OCI-LY7 (cell line): ENCODE measurements at regions of chr22 and their contacts with region 1.

Region 1: GRCh38 chr22:23178512-23179254 is 1.6 kb upstream of the BCR start:
- DNase-seq: peak; percentile 70
- H3K4me3 ChIP-seq: no peak overlapping the region
- H3K27ac ChIP-seq: peak overlapping the region; percentile 33
- H3K4me1 ChIP-seq: peaks cover 57% of the 10 kb centered on the region
- CTCF ChIP-seq: peak; percentile 99

Region 2: GRCh38 chr22:23014250-23014649 is 164.4 kb before region 1 on chr22:
- CTCF ChIA-PET with region 1: no interaction called
- POLR2A ChIA-PET with region 1: no interaction called
- intact Hi-C with region 1: no loop called
- DNase-seq: no peak
- H3K4me3 ChIP-seq: no peak overlapping the region
- H3K27ac ChIP-seq: no peak overlapping the region
- H3K4me1 ChIP-seq: no peaks in the 10 kb centered on the region
- CTCF ChIP-seq: no peak

Region 3: DNA sequence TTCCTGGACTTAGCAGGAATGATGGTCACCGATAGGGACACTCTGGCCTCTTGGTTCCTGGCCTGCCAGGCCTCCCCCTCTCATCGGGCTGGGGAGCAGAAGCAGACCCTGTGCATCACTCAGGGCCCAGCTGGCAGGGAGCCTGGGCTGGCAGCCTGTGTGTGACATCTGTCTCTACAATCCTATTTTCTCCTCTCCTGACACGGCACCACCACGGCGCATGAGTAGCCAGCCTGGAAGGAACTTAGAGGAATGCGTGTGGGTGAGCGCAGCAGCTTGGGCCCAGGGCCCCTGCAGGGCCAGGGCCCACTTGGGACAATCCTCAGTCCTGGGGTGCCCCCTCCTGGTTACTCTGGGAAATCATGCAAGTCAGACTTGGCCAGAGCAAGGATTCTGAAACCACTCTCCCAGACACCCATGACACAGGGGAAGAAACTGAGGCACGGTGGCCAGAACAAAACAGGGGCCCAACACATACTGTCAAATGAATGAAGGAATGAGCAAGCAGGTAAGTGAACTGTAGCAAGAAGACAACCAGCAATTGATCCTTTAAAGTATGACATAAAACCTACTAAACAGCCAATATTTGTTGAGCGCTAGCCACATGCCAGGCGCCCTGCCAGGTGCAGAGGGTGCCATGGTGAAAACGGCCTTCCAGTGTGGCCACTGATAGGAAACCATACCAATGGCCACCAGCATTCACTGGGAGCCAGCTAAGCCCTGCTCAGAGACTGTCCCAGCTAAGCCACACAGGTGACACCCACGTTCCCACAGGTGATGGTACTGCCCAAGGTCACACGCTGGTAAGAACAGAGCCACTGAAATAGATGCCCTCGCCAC is 50.2 kb before region 1 on chr22:
- CTCF ChIA-PET with region 1: no interaction called
- POLR2A ChIA-PET with region 1: no interaction called
- intact Hi-C with region 1: loop called (anchors 1 kb)
- DNase-seq: peak; percentile 87
- H3K4me3 ChIP-seq: no peak overlapping the region
- H3K27ac ChIP-seq: no peak overlapping the region
- H3K4me1 ChIP-seq: peaks cover 17% of the 10 kb centered on the region
- CTCF ChIP-seq: peak; percentile 97

Region 4: DNA sequence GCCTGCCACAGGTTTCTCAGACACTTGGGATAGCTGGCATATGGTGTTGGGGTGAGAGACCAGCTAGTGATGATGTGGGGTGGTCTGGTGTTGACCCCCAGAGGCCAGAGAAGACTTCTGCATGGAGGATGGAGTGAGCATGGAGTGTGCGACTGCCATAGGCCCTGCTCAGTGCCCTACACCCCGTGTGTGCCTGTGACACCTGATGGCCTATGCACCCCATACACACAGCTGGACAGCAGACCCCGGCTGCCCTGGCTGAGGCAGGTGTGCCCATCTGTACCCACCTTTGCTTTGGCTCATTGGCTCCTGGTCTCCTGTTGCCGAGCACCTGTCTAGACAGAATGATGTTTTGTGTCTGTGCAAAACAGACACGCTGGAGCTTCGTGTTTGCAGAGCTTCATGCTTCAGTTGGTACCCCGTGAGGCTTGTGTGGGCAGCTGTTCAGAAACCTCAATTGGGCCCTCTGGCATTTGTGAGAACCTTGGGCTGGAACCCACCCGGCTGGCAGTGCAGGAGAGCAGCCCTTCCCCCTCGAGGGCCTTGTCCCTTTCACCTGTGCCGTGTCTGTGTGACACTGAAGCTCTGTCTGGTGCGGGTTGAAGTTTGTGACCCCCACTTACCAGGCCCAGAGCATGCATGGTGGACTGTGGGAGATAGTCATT is 29.2 kb after region 1 on chr22:
- CTCF ChIA-PET with region 1: no interaction called
- POLR2A ChIA-PET with region 1: interaction called, 4 read pairs
- intact Hi-C with region 1: loop called (anchors 2 kb)
- DNase-seq: peak; percentile 92
- H3K4me3 ChIP-seq: peak overlapping the region; percentile 21
- H3K27ac ChIP-seq: peak overlapping the region; percentile 82
- H3K4me1 ChIP-seq: peaks cover 66% of the 10 kb centered on the region
- CTCF ChIP-seq: no peak

Region 5: GRCh38 chr22:23270212-23270733 is 91.6 kb after region 1 on chr22:
- CTCF ChIA-PET with region 1: no interaction called
- POLR2A ChIA-PET with region 1: no interaction called
- intact Hi-C with region 1: loop called (anchors 1 kb)
- DNase-seq: peak; percentile 64
- H3K4me3 ChIP-seq: peak overlapping the region; percentile 47
- H3K27ac ChIP-seq: peak overlapping the region; percentile 94
- H3K4me1 ChIP-seq: peaks cover 72% of the 10 kb centered on the region
- CTCF ChIP-seq: no peak; the same call in 1 of the 2 replicates

Region 6: GRCh38 chr22:23289851-23290724 is 111.4 kb after region 1 on chr22:
- CTCF ChIA-PET with region 1: interaction called, 3 read pairs
- POLR2A ChIA-PET with region 1: no interaction called
- intact Hi-C with region 1: loop called (anchors 2 kb)
- DNase-seq: peak; percentile 60
- H3K4me3 ChIP-seq: no peak overlapping the region
- H3K27ac ChIP-seq: no peak overlapping the region
- H3K4me1 ChIP-seq: no peaks in the 10 kb centered on the region
- CTCF ChIP-seq: peak; percentile 84